Endothelial cell of umbilical vein (primary cell): ENCODE measurements at regions of chr3 and their contacts with region 1.

Region 1: DNA sequence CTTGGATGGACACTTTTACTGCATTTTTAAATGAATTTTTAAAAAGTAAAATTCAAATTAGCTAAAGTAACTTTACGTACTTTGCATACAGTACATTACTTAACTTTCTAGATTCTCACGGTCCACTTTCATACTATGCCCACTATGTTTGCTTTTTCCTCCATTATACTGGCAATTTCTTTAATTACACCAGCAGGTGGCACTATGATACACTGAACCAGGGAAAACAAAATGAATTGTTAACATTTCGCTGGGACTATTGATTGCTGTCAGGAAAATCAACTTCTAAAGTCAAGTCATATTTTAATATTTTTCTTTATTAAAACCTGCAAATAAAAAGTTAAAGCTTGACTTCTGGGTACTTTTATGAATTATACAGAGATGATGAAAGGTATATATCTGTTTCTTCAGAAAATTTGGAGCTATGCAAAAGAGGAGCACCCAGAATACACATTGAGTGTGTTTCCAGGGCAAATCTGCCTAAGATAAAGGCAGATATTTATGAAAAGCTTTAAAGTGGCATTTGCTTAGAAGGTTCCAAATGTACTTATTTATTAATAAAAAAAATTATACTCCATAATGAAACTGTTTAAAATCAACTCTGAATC is 21.8 kb upstream of the POU1F1 start:
- DNase-seq: peak; percentile 59
- H3K4me3 ChIP-seq: no peak overlapping the region
- H3K27ac ChIP-seq: no peak overlapping the region
- H3K4me1 ChIP-seq: no peaks in the 10 kb centered on the region
- H3K27me3 ChIP-seq: no peaks in the 10 kb centered on the region
- CTCF ChIP-seq: peak; percentile 25 to 35
- POLR2A ChIP-seq: no peak

Region 2: GRCh38 chr3:87132801-87133200 is 165.4 kb before region 1 on chr3:
- CTCF ChIA-PET with region 1: no interaction called
- POLR2A ChIA-PET with region 1: no interaction called
- dilution Hi-C with region 1: no loop called
- intact Hi-C with region 1: no loop called
- DNase-seq: no peak
- H3K4me3 ChIP-seq: no peak overlapping the region
- H3K27ac ChIP-seq: no peak overlapping the region
- H3K4me1 ChIP-seq: no peaks in the 10 kb centered on the region
- H3K27me3 ChIP-seq: no peaks in the 10 kb centered on the region
- CTCF ChIP-seq: no peak
- POLR2A ChIP-seq: no peak

Region 3: GRCh38 chr3:87318617-87319021 is 20.4 kb after region 1 on chr3:
- CTCF ChIA-PET with region 1: interaction called, 13 read pairs
- POLR2A ChIA-PET with region 1: no interaction called
- dilution Hi-C with region 1: no loop called
- intact Hi-C with region 1: no loop called
- DNase-seq: peak; percentile 80
- H3K4me3 ChIP-seq: no peak overlapping the region
- H3K27ac ChIP-seq: no peak overlapping the region
- H3K4me1 ChIP-seq: peaks cover 8% of the 10 kb centered on the region
- H3K27me3 ChIP-seq: no peaks in the 10 kb centered on the region
- CTCF ChIP-seq: no peak
- POLR2A ChIP-seq: no peak

Region 4: DNA sequence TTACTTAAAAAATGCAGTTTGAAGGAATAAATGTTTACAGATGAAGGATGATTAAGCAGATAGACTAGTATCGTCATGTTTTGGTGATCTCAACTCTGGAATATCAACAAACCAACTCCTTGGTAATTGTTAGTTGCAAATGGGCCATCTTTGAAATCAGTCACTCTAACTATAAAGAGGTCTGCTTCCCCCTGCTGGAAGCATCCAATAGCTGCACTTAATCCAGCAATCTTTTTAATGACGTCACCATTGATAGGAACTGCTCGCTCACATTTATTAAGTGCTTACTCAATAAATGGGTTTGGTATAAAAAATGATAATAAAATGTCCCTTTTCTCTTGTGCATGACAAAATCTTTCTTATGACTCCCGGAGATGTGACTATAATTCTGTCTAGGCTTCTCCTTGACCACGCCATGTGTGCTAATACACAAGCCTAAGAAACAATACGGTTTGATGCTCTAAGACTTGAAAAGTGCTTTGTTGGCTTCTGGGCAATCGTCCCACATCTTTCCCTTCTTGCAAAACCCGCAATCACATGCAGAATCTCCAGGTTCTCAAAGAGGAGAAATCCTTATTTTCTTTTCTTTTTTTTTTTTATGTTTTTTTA is 205.8 kb after region 1 on chr3:
- CTCF ChIA-PET with region 1: interaction called, 138 read pairs
- POLR2A ChIA-PET with region 1: no interaction called
- dilution Hi-C with region 1: no loop called
- intact Hi-C with region 1: loop called (anchors 1 kb)
- DNase-seq: peak; percentile 85
- H3K4me3 ChIP-seq: no peak overlapping the region
- H3K27ac ChIP-seq: no peak overlapping the region
- H3K4me1 ChIP-seq: no peaks in the 10 kb centered on the region
- H3K27me3 ChIP-seq: peaks cover 0 to 2% of the 10 kb centered on the region in 2 experiments
- CTCF ChIP-seq: peak; percentile 66 to 67
- POLR2A ChIP-seq: no peak

Region 5: DNA sequence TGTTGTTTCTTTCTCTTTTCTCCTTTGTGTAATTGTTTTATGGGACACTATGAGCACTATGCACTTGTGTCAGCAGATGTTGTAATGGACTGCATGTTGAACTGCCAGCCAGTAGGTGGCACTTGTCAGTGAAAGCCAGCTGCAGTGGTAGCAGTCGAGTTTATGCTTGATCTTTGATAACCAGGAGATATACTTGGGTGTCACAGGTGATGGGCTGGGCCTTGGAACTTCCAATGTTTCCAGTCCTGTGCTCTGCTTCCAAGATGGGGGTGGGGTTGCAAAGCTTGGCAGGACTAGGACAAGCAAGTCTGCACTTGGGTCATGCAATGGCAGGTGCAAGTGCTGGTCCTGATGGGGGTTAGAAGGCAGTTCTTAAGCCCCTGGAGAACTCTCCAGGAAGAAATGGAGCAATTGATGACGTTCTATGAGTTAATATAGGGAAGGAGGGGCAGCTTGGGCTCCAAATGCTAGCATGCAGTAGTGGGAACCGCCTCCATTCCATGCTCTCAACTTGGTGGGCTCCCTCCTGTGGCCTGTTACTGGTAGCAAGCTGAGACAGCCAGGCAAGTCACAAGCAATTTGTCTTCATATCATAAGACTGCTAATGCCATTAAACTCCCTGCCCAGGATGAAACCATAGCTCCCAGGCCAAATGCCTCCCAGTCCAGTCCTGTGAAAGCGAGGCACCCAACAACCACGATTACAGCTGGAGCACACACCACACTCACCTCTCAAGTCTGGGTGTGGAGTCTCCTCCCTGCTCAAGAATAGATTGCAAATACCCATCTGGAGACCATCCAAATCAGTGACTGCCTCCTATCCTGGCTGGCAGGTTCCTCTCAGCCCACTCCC is 473.4 kb after region 1 on chr3:
- CTCF ChIA-PET with region 1: interaction called, 5 read pairs
- POLR2A ChIA-PET with region 1: no interaction called
- dilution Hi-C with region 1: no loop called
- intact Hi-C with region 1: loop called (anchors 5 kb)
- DNase-seq: peak; percentile 52
- H3K4me3 ChIP-seq: no peak overlapping the region
- H3K27ac ChIP-seq: no peak overlapping the region
- H3K4me1 ChIP-seq: no peaks in the 10 kb centered on the region
- H3K27me3 ChIP-seq: peaks cover 0 to 3% of the 10 kb centered on the region in 2 experiments
- CTCF ChIP-seq: peak; percentile 76 to 79
- POLR2A ChIP-seq: no peak

Region 6: DNA sequence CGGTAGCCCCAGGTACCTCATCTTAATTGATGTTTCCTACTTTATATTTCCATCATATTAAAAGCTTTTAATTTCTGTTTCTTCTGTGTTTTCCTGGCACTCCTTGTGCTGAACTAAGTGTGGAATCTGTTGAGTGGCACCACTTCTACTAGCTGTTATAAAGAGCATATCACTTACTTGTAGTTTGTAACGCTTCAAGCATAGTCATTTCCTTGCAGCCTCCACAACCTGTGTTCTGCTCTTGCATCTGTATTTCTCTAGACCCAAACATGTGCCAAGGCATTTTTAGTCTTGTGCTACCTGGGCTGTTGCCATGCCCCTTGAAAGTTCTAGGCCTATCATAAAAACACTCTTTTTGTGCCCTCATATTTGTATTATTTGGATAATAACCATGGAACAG is 776.9 kb after region 1 on chr3:
- CTCF ChIA-PET with region 1: no interaction called
- POLR2A ChIA-PET with region 1: no interaction called
- dilution Hi-C with region 1: no loop called
- intact Hi-C with region 1: no loop called
- DNase-seq: no peak
- H3K4me3 ChIP-seq: no peak overlapping the region
- H3K27ac ChIP-seq: no peak overlapping the region
- H3K4me1 ChIP-seq: no peaks in the 10 kb centered on the region
- H3K27me3 ChIP-seq: no peaks in the 10 kb centered on the region
- CTCF ChIP-seq: no peak
- POLR2A ChIP-seq: no peak